Endothelial cell of umbilical vein (primary cell): ENCODE measurements at regions of chr21 and their contacts with region 1.

Region 1: DNA sequence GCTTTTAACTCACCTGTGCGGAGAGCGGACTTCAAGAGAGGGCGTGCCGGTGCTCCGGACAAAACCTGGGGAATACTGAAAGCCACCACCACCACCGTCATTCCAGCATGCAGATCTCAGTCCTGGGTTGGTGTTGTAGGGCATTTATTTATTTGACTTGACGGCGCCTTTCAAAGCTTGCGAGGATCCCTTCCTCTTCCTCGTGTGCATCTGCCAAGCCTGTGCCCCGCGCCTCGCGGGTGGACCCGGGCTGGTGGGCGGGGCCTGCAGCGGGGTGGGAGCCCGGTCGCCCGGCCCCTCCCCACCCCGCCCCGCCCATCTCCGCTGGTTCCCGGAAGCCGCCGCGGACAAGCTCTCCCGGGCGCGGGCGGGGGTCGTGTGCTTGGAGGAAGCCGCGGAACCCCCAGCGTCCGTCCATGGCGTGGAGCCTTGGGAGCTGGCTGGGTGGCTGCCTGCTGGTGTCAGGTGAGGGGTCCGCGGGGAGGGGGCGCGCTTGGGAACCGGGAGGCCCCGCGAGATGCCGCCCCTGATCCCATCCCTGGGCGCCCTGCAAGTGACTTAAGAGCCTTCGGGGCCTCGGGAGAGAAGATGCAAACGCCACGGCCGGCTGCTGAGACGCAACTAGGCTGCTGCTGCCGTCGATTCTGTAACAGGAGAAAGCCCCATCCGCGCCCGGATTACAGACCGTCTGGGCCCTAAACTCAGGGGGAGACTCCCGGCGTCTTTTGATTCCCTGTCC is at the start of gene IL10RB:
- DNase-seq: peak; percentile 72
- H3K4me3 ChIP-seq: peak within 1 kb of the TSS; percentile 77 to 88 (median 84)
- H3K27ac ChIP-seq: peak within 1 kb of the TSS; percentile 54
- H3K4me1 ChIP-seq: peaks cover 10% of the 10 kb centered on the region
- H3K27me3 ChIP-seq: no peaks in the 10 kb centered on the region
- CTCF ChIP-seq: no peak
- POLR2A ChIP-seq: no peak
- total RNA-seq, gene IL10RB: 21.7 and 21.9 TPM in 2 replicates

Region 2: GRCh38 chr21:32120230-32120629 is 1146.0 kb before region 1 on chr21:
- CTCF ChIA-PET with region 1: no interaction called
- POLR2A ChIA-PET with region 1: no interaction called
- dilution Hi-C with region 1: no loop called
- intact Hi-C with region 1: no loop called
- DNase-seq: no peak
- H3K4me3 ChIP-seq: no peak overlapping the region
- H3K27ac ChIP-seq: no peak overlapping the region
- H3K4me1 ChIP-seq: no peaks in the 10 kb centered on the region
- H3K27me3 ChIP-seq: no peaks in the 10 kb centered on the region
- CTCF ChIP-seq: no peak
- POLR2A ChIP-seq: no peak

Region 3: GRCh38 chr21:33078907-33079582 is 187.2 kb before region 1 on chr21:
- CTCF ChIA-PET with region 1: no interaction called
- POLR2A ChIA-PET with region 1: no interaction called
- dilution Hi-C with region 1: no loop called
- intact Hi-C with region 1: no loop called
- DNase-seq: no peak
- H3K4me3 ChIP-seq: no peak overlapping the region
- H3K27ac ChIP-seq: no peak overlapping the region
- H3K4me1 ChIP-seq: no peaks in the 10 kb centered on the region
- H3K27me3 ChIP-seq: peaks cover 28 to 31% of the 10 kb centered on the region in 2 experiments
- CTCF ChIP-seq: no peak
- POLR2A ChIP-seq: no peak

Region 4: DNA sequence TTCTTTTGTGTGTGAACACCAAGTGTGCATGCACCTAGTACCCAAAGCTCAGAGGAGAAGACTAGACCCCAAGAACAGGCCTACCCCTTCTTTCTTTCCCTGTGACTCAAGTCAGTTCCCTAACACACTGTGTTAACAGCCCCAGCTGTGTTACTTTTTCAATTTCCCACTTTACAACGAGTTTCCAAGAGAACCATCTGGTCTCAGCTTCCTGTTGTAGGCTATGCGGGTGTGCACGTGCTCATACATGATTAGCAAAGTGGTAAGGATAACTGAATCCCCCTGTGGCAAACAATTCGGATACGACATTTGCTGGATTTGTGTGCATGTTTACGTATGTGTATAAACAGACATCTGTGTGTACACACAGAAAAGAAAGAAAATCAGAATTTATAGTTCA is 18.6 kb before region 1 on chr21:
- CTCF ChIA-PET with region 1: no interaction called
- POLR2A ChIA-PET with region 1: no interaction called
- dilution Hi-C with region 1: no loop called
- intact Hi-C with region 1: no loop called
- DNase-seq: no peak
- H3K4me3 ChIP-seq: no peak overlapping the region
- H3K27ac ChIP-seq: no peak overlapping the region
- H3K4me1 ChIP-seq: peaks cover 4% of the 10 kb centered on the region
- H3K27me3 ChIP-seq: no peaks in the 10 kb centered on the region
- CTCF ChIP-seq: no peak
- POLR2A ChIP-seq: no peak

Region 5: DNA sequence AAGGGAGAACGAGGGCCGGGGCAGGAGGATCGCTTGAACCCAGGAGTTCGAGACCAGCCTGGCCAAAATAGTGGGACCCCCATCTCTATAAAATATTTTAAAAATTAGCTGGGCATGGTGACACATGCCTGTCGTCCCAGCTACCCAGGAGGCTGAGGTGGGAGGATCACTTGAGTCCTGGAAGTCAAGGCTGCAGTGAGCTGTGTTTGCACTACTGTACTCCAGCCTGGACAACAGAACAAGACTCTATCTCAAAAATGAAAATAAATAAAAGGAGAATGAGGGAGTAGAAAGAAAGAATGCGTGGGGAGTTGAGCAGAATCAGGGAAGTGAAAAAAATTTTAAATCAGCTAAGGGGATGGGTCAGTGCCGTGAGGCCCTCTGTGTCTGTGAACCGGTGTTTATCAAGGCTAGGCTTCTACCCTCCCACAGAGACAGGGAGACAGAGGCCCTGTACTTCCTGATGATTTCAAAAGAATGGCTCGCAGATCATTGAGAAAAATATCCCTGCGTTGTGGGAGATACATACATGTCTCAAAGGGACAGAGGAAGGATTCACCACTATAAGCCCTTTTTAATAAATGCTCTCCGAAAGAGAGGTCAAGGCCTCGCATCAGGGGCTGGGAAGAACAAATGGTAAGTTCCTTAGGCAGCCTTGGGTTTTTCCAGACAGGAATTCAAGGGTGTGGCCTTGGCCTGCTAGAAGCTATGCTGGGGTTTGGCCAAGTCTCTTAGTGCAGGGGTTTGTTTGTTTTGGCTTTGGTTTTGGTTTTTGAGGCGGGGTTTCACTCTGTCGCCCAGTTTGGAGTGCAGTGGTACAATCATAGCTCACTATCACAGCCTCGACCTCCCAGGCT is 20.6 kb after region 1 on chr21:
- CTCF ChIA-PET with region 1: interaction called, 3 read pairs
- POLR2A ChIA-PET with region 1: no interaction called
- dilution Hi-C with region 1: no loop called
- intact Hi-C with region 1: loop called (anchors 2 kb)
- DNase-seq: peak; percentile 75
- H3K4me3 ChIP-seq: no peak overlapping the region
- H3K27ac ChIP-seq: peak overlapping the region; percentile 38
- H3K4me1 ChIP-seq: peaks cover 28% of the 10 kb centered on the region
- H3K27me3 ChIP-seq: no peaks in the 10 kb centered on the region
- CTCF ChIP-seq: no peak
- POLR2A ChIP-seq: no peak

Region 6: GRCh38 chr21:33622253-33622652 is 356.0 kb after region 1 on chr21:
- CTCF ChIA-PET with region 1: no interaction called
- POLR2A ChIA-PET with region 1: no interaction called
- dilution Hi-C with region 1: no loop called
- intact Hi-C with region 1: no loop called
- DNase-seq: no peak
- H3K4me3 ChIP-seq: no peak overlapping the region
- H3K27ac ChIP-seq: no peak overlapping the region
- H3K4me1 ChIP-seq: no peaks in the 10 kb centered on the region
- H3K27me3 ChIP-seq: no peaks in the 10 kb centered on the region
- CTCF ChIP-seq: no peak
- POLR2A ChIP-seq: no peak